ENCODE measurements at regions of chr11 and their contacts with region 1.

Region 1: GRCh38 chr11:92886243-92886905 is 83.1 kb upstream of the MTNR1B start:
- DNase-seq: peak; percentile 86
- H3K4me3 ChIP-seq: no peak overlapping the region; a peak in 1 of 4 replicates
- H3K27ac ChIP-seq: no peak overlapping the region
- H3K4me1 ChIP-seq: peaks cover 0 to 7% of the 10 kb centered on the region in 2 experiments; a peak in 2 of 4 replicates
- H3K27me3 ChIP-seq: no peaks in the 10 kb centered on the region
- CTCF ChIP-seq: peak; percentile 91
- EP300 ChIP-seq: no peak
- RAD21 ChIP-seq: peak; percentile 96

Region 2: DNA sequence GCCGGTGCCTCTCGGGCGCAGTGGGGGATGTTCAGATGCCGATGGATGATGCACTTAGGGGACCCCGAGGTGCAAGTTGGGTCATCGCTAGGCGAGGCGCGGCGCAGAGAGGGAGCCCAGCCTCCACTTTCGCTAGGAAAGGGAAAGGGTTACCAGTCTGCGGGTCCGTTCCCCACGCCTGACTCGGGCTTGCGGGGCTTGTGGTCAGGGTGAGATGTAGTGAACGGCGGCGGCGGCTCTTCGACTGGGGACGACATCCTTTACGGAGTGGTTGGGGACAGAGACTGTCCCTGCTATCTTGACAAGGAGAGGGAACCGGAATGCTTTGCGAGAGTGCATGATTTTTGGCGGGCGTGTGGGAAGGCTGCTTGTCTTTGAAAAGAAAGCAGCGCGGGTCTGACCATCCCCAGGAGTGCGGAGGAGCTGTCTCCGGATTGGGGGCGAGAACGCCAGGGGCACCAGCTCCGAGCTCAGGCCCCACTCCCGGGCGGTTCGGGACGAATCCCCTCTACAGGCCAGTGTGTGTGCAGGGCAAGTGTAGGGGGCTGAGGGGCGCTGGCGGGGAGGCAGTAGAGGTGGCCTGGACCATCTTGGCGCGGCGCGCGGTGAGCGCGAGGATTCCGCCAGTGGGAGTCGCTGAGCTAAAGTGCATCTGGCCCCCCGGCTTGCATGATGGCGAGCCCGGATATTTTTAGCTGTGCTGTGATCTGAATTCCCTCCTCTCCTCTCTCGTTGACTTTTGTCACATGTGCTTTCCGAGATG is 660.6 kb before region 1 on chr11:
- CTCF ChIA-PET with region 1: interaction called, 10 read pairs
- POLR2A ChIA-PET with region 1: no interaction called
- DNase-seq: peak; percentile 71
- H3K4me3 ChIP-seq: peak overlapping the region; percentile 53 to 89
- H3K27ac ChIP-seq: peak overlapping the region in 1 of 2 experiments; percentile 60; a peak in 1 of 4 replicates
- H3K4me1 ChIP-seq: peaks cover 0 to 30% of the 10 kb centered on the region in 2 experiments; a peak in 2 of 4 replicates
- H3K27me3 ChIP-seq: no peaks in the 10 kb centered on the region; the same call in 1 of the 2 replicates
- CTCF ChIP-seq: peak; percentile 53
- EP300 ChIP-seq: no peak
- RAD21 ChIP-seq: peak; percentile 42

Region 3: GRCh38 chr11:92830377-92831155 is 55.8 kb before region 1 on chr11:
- CTCF ChIA-PET with region 1: no interaction called
- POLR2A ChIA-PET with region 1: no interaction called
- DNase-seq: no peak
- H3K4me3 ChIP-seq: no peak overlapping the region
- H3K27ac ChIP-seq: no peak overlapping the region
- H3K4me1 ChIP-seq: peaks cover 0 to 28% of the 10 kb centered on the region in 2 experiments; a peak in 3 of 4 replicates
- H3K27me3 ChIP-seq: no peaks in the 10 kb centered on the region
- CTCF ChIP-seq: no peak
- EP300 ChIP-seq: no peak
- RAD21 ChIP-seq: no peak

Region 4: DNA sequence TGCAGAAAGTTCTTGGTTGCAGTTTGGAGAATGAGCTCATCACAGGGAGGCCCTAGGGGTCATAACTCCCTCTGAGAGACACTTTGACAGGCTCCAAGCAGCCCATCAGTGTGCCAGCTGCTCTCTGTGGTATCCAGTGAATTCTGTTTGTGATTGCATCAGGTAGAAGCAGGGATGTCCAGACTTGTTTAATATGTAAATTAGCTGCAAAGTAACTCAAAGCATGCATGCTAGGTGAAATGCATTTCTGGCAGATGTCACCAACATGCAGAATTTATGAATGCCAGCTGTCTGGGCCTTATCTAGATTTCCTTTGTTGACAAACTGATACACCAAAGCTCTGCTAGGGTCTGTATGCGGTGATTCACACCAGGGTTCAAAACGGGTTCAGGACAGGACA is 40.6 kb before region 1 on chr11:
- CTCF ChIA-PET with region 1: interaction called, 12 read pairs
- POLR2A ChIA-PET with region 1: no interaction called
- DNase-seq: peak; percentile 45
- H3K4me3 ChIP-seq: no peak overlapping the region
- H3K27ac ChIP-seq: no peak overlapping the region; a peak in 2 of 4 replicates
- H3K4me1 ChIP-seq: peaks cover 12 to 14% of the 10 kb centered on the region in 2 experiments; a peak in 1 of 4 replicates
- H3K27me3 ChIP-seq: no peaks in the 10 kb centered on the region
- CTCF ChIP-seq: no peak
- EP300 ChIP-seq: 0 out of 4 replicates have a peak, but pooled peaks of 1 of the 2 experiments have one; percentile 22
- RAD21 ChIP-seq: no peak

Region 5: DNA sequence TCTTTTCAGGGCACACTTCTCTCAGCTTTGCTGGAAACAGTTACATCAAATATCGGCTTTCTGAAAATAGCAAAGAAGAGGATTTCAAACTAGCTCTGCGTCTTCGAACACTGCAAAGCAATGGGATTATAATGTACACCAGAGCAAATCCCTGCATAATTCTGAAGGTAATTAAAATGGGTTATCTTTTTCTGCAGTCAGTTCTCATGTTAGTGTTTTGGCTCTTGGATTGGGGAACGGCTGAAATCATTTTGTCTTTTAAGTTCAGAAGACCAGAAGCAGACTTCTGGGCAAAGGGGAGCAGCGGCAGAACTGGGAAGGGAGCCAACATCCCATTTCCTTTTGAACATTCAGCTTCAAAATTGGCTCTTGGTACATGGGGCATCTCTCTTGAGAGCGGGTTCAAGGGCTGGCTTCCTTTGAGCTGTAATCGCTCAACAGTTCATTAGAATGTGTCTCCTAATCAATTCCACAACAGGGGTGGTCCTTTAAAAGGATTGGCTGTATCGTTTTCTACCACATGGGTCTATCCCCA is 27.2 kb before region 1 on chr11:
- CTCF ChIA-PET with region 1: interaction called, 13 read pairs
- POLR2A ChIA-PET with region 1: no interaction called
- DNase-seq: no peak
- H3K4me3 ChIP-seq: no peak overlapping the region
- H3K27ac ChIP-seq: no peak overlapping the region
- H3K4me1 ChIP-seq: peaks cover 0 to 4% of the 10 kb centered on the region in 2 experiments; a peak in 1 of 4 replicates
- H3K27me3 ChIP-seq: no peaks in the 10 kb centered on the region
- CTCF ChIP-seq: no peak
- EP300 ChIP-seq: no peak
- RAD21 ChIP-seq: no peak

Region 6: DNA sequence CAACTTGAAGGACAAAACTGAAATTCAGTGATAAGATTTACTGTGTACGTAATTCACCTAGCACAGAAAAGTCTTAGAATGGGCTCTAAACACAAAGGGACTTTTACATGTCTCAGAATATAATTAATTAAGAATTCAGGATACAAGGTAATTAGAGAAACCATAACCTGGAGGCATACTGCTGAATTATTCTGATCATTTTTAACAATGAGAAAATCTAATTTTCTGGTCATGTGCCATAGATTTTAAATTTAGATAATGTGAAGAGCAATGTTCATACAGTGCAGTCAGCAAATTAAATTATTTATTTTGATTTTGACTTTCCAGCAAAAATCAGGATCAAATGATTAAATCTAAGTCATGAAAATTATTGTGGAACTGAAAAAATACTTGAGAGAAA is 16.0 kb after region 1 on chr11:
- CTCF ChIA-PET with region 1: interaction called, 14 read pairs
- POLR2A ChIA-PET with region 1: no interaction called
- DNase-seq: no peak
- H3K4me3 ChIP-seq: no peak overlapping the region
- H3K27ac ChIP-seq: no peak overlapping the region; a peak in 1 of 4 replicates
- H3K4me1 ChIP-seq: peaks cover 0 to 8% of the 10 kb centered on the region in 2 experiments; a peak in 2 of 4 replicates
- H3K27me3 ChIP-seq: no peaks in the 10 kb centered on the region
- CTCF ChIP-seq: no peak
- EP300 ChIP-seq: no peak; a peak in 1 of 4 replicates
- RAD21 ChIP-seq: no peak